ENCODE measurements at regions of chr11 and their contacts with region 1.

Region 1: GRCh38 chr11:107741044-107741823 is 29.4 kb upstream of the SLN start:
- DNase-seq: peak; percentile 26
- H3K4me3 Mint-ChIP-seq: no peak overlapping the region
- H3K27ac Mint-ChIP-seq: no peak overlapping the region
- H3K4me1 Mint-ChIP-seq: no peaks in the 10 kb centered on the region
- H3K27me3 Mint-ChIP-seq: peaks cover 18% of the 10 kb centered on the region

Region 2: GRCh38 chr11:107757661-107758060 is 16.4 kb after region 1 on chr11:
- CTCF ChIA-PET with region 1: interaction called, 13 read pairs
- POLR2A ChIA-PET with region 1: no interaction called
- intact Hi-C with region 1: no loop called
- DNase-seq: no peak
- H3K4me3 Mint-ChIP-seq: no peak overlapping the region
- H3K27ac Mint-ChIP-seq: no peak overlapping the region
- H3K4me1 Mint-ChIP-seq: no peaks in the 10 kb centered on the region
- H3K27me3 Mint-ChIP-seq: peaks cover 41% of the 10 kb centered on the region

Region 3: DNA sequence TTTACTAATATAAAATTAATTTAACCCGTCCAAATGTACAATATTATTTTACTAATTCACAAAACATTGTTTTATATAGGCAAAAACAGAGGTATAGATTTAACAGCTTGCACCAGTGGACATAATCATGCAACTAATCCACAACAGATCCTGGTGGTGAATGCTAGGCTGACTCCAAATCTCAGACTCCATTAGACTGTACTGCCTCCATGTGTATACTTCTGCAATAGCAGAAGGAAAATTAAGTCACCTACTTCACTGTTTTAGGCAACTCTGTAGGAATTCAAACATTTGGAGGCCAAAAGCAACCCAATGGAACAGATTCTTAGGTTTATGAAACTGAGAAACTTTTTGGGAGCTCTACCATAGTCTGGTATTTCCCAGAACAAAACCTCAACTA is 157.0 kb after region 1 on chr11:
- CTCF ChIA-PET with region 1: interaction called, 7 read pairs
- POLR2A ChIA-PET with region 1: no interaction called
- intact Hi-C with region 1: loop called (anchors 1 kb)
- DNase-seq: no peak
- H3K4me3 Mint-ChIP-seq: no peak overlapping the region
- H3K27ac Mint-ChIP-seq: no peak overlapping the region
- H3K4me1 Mint-ChIP-seq: no peaks in the 10 kb centered on the region
- H3K27me3 Mint-ChIP-seq: peaks cover 3% of the 10 kb centered on the region